ENCODE measurements at regions of chr20 and their contacts with region 1.

Region 1: GRCh38 chr20:13546497-13547131 is 92.1 kb downstream of the TASP1 start:
- DNase-seq: peak; percentile 89
- ATAC-seq: peak; percentile 81
- H3K4me3 Mint-ChIP-seq: no peak overlapping the region
- H3K27ac Mint-ChIP-seq: peak overlapping the region; percentile 77; the same call in 1 of the 2 replicates
- H3K4me1 Mint-ChIP-seq: peaks cover 8% of the 10 kb centered on the region
- H3K27me3 Mint-ChIP-seq: no peaks in the 10 kb centered on the region
- CTCF ChIP-seq: peak; percentile 74

Region 2: DNA sequence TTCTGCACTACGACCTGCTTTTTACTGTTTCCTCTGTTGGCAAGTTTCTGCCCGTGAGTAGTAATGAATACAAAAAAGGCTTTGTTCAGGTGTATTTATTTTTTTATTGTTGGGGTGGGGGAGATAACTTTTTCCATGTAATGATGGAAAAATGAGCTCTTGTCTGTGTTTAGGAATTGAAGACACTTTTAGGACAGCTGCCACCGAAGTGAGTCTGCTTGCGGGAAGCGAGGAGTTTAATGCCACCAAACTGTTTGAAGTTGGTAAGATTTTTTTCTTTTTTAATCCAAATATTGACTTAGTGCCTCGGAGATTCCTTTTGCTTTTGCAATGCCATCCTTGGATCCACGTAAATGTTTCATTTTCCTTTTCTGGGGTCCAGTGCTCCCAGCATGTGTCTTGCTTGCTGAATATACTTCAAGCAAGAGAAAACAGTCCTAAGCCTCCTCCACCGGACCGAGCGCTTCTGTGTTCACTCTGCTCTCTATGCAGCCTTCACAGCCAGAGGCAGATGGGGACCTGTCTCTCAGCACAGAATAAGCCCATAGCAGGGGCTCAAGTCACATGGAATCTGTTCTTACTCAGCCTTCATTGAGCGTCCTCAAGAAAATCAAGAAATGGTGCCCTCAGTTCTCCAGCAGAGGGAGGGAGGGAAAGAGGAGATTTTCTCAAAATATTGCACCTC is 254.3 kb before region 1 on chr20:
- CTCF ChIA-PET with region 1: no interaction called
- POLR2A ChIA-PET with region 1: no interaction called
- DNase-seq: no peak
- ATAC-seq: no peak
- H3K4me3 Mint-ChIP-seq: no peak overlapping the region
- H3K27ac Mint-ChIP-seq: no peak overlapping the region
- H3K4me1 Mint-ChIP-seq: peaks cover 4% of the 10 kb centered on the region; the same call in 1 of the 2 replicates
- H3K27me3 Mint-ChIP-seq: no peaks in the 10 kb centered on the region
- CTCF ChIP-seq: no peak

Region 3: DNA sequence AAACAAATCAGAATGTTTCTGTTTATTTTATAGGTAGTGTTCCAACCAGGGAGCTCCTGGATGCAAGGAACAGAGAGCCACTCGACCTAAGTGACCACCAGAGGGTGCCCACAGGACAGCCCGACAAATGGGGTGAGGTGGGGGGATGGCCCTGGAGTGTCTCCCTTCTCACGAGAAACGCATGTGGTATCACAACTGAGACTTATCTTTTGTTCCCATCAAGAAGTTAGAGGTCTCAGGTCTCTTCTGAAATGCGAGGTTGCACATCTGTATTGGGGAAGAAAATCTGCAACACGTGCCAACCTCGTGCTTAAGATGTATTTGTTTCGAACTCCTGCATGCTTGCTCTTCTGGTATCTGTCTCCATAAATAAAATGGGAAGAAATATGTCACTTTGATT is 221.6 kb before region 1 on chr20:
- CTCF ChIA-PET with region 1: interaction called, 153 read pairs
- POLR2A ChIA-PET with region 1: no interaction called
- DNase-seq: peak; percentile 78
- ATAC-seq: peak; percentile 99
- H3K4me3 Mint-ChIP-seq: no peak overlapping the region
- H3K27ac Mint-ChIP-seq: no peak overlapping the region
- H3K4me1 Mint-ChIP-seq: peaks cover 29% of the 10 kb centered on the region
- H3K27me3 Mint-ChIP-seq: no peaks in the 10 kb centered on the region; the same call in 1 of the 2 replicates
- CTCF ChIP-seq: peak; percentile 35; the same call in 1 of the 2 replicates

Region 4: GRCh38 chr20:13461849-13462458 is 84.7 kb before region 1 on chr20:
- CTCF ChIA-PET with region 1: interaction called, 11 read pairs
- POLR2A ChIA-PET with region 1: interaction called, 3 read pairs
- DNase-seq: no peak
- ATAC-seq: no peak
- H3K4me3 Mint-ChIP-seq: no peak overlapping the region
- H3K27ac Mint-ChIP-seq: no peak overlapping the region
- H3K4me1 Mint-ChIP-seq: peaks cover 2% of the 10 kb centered on the region; the same call in 1 of the 2 replicates
- H3K27me3 Mint-ChIP-seq: no peaks in the 10 kb centered on the region
- CTCF ChIP-seq: no peak

Region 5: DNA sequence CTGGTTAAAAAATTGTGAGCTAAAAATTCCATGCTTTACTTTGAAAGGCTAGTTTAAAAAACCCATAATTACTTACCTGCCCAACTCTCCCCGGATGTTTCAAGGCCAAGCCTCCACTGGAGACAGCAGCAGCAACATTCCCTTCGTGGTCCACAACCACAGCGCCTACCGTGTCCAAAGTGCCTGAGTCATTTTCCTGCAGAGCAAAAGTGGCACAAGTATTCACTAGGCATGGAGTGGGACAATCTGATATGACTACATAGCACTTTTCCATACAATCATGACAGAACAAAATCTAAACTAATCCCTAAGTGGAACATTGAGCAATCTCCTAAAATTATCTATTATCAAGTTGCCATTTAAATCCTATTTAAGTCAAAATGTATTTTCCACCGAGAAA is 12.7 kb before region 1 on chr20:
- CTCF ChIA-PET with region 1: interaction called, 16 read pairs
- POLR2A ChIA-PET with region 1: interaction called, 4 read pairs
- DNase-seq: no peak
- ATAC-seq: no peak
- H3K4me3 Mint-ChIP-seq: no peak overlapping the region
- H3K27ac Mint-ChIP-seq: peak overlapping the region; percentile 87; the same call in 1 of the 2 replicates
- H3K4me1 Mint-ChIP-seq: peaks cover 10% of the 10 kb centered on the region
- H3K27me3 Mint-ChIP-seq: no peaks in the 10 kb centered on the region
- CTCF ChIP-seq: no peak

Measured in WTC11 (cell line).